CD4-positive, alpha-beta T cell (primary cell): ENCODE measurements at regions of chr19 and their contacts with region 1.

Region 1: GRCh38 chr19:4909897-4910593 is 744 bp downstream of the UHRF1 start:
- DNase-seq: peak; percentile 87 to 96 (median 92)
- ATAC-seq: peak; percentile 88
- H3K4me3 ChIP-seq: peak overlapping the region; percentile 51
- H3K4me3 Mint-ChIP-seq: peak overlapping the region; percentile 98
- H3K27ac ChIP-seq: no peak overlapping the region
- H3K27ac Mint-ChIP-seq: peak overlapping the region; percentile 84
- H3K4me1 ChIP-seq: peaks cover 58% of the 10 kb centered on the region
- H3K4me1 Mint-ChIP-seq: peaks cover 52% of the 10 kb centered on the region
- H3K27me3 ChIP-seq: no peaks in the 10 kb centered on the region
- H3K27me3 Mint-ChIP-seq: no peaks in the 10 kb centered on the region
- CTCF ChIP-seq: no peak

Region 2: DNA sequence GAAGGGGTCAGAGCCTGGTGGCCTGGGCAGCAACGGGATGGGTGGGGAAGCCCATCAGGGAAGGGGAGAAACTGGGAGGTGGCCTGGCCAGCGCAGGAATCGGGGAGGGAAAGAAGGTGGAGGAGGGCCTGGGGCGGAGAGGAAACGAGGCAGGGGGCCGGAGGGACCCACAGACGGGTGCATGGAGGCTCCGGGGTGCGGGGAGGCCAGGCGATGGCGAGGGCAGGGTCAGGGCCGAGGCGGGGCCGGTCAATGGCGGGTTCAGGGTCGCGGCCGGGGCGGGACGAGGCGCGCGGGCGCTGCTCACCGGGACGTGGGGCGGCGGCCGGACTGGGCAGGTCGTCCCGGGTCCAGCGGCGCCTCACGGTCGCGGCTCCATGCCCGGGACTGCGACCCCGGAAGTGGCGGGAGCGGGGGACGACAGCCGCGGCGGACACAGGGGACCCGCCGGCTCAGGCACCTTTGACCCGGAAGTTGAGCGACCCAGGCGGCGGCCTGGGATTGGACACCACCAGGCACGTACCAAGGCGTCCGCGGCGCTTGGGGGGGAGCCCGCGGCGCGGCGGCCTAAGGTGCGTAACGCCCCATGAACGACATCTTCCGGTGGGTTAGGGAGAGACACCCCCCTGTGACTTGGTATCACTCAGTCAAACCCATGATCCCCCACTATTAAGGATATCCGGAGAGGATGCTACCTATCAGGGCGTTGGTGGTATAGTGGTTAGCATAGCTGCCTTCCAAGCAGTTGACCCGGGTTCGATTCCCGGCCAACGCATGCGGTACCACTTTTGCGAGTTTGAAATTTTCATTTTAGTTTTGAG is 186.5 kb before region 1 on chr19 and contains the start of gene DPP9:
- CTCF ChIA-PET with region 1: no interaction called
- POLR2A ChIA-PET with region 1: no interaction called
- intact Hi-C with region 1: loop called (anchors 5 to 10 kb)
- DNase-seq: peak; percentile 93 to 100 (median 96)
- ATAC-seq: peak; percentile 93
- H3K4me3 ChIP-seq: peak within 1 kb of the TSS; percentile 97
- H3K4me3 Mint-ChIP-seq: peak within 1 kb of the TSS; percentile 95
- H3K27ac ChIP-seq: peak within 1 kb of the TSS; percentile 64 to 85
- H3K27ac Mint-ChIP-seq: peak within 1 kb of the TSS; percentile 97
- H3K4me1 ChIP-seq: peaks cover 30% of the 10 kb centered on the region
- H3K4me1 Mint-ChIP-seq: peaks cover 25% of the 10 kb centered on the region
- H3K27me3 ChIP-seq: no peaks in the 10 kb centered on the region
- H3K27me3 Mint-ChIP-seq: peaks cover 13% of the 10 kb centered on the region
- CTCF ChIP-seq: no peak
- total RNA-seq, gene DPP9: 67.9 to 72.8 TPM

Region 3: DNA sequence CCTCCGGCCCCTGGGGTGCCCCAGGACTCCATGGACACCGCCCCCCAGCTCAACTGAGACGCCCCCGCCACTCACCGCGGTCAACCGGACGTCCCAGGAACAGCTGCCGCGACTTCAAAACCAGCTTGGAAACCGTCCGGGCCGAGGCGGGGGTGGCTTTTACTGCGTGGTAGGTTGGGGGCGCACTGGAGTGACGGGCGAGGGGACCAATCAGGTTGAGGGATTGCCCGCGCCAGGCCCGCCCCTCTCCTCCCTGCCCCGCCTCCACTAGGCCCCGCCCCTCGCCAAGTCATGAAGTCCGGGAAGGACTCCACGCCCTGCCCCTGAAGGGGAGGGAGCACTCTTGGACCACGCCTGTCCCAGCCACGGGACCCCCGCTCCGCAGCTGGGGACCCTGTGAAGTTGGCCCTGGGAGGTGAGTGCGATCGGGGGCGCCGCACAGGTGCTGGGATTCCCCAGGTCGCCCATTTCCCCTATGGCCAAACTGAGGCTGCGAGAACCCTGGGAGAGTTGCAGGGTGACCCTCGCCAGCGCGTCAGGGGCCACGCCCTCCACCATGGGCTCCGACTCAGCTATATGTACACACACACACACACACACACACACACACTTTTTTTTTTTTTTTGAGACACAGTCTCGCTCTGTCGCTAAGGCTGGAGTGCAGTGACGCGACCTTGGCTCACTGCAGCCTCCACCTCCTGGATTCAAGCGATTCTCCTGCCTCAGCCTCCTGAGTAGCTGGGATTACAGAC is 42.3 kb before region 1 on chr19 and contains the start of gene PLIN3:
- CTCF ChIA-PET with region 1: interaction called, 60 read pairs
- POLR2A ChIA-PET with region 1: interaction called, 24 read pairs
- intact Hi-C with region 1: loop called (anchors 1 kb)
- DNase-seq: peak; percentile 83 to 94 (median 89)
- ATAC-seq: peak; percentile 93
- H3K4me3 ChIP-seq: peak within 1 kb of the TSS; percentile 89
- H3K4me3 Mint-ChIP-seq: peak within 1 kb of the TSS; percentile 88
- H3K27ac ChIP-seq: peak within 1 kb of the TSS in 1 of 2 donors; percentile 70
- H3K27ac Mint-ChIP-seq: peak within 1 kb of the TSS; percentile 69
- H3K4me1 ChIP-seq: peaks cover 26% of the 10 kb centered on the region
- H3K4me1 Mint-ChIP-seq: peaks cover 11% of the 10 kb centered on the region
- H3K27me3 ChIP-seq: no peaks in the 10 kb centered on the region
- H3K27me3 Mint-ChIP-seq: peaks cover 3% of the 10 kb centered on the region
- CTCF ChIP-seq: no peak
- total RNA-seq, gene PLIN3: 18.2 to 19.1 TPM

Region 4: GRCh38 chr19:4968462-4969291 is 58.6 kb after region 1 on chr19 and contains the start of gene KDM4B:
- CTCF ChIA-PET with region 1: interaction called, 9 read pairs
- POLR2A ChIA-PET with region 1: interaction called, 131 read pairs
- intact Hi-C with region 1: loop called in 1 of 2 experiments (anchors 2 kb)
- DNase-seq: peak; percentile 96 to 100 (median 98)
- ATAC-seq: peak; percentile 88
- H3K4me3 ChIP-seq: peak within 1 kb of the TSS; percentile 63
- H3K4me3 Mint-ChIP-seq: peak within 1 kb of the TSS; percentile 92
- H3K27ac ChIP-seq: peak within 1 kb of the TSS; percentile 18 to 59
- H3K27ac Mint-ChIP-seq: peak within 1 kb of the TSS; percentile 87
- H3K4me1 ChIP-seq: peaks cover 44% of the 10 kb centered on the region
- H3K4me1 Mint-ChIP-seq: peaks cover 32% of the 10 kb centered on the region
- H3K27me3 ChIP-seq: no peaks in the 10 kb centered on the region
- H3K27me3 Mint-ChIP-seq: no peaks in the 10 kb centered on the region
- CTCF ChIP-seq: no peak
- total RNA-seq, gene KDM4B: 41.8 to 42.5 TPM

Region 5: DNA sequence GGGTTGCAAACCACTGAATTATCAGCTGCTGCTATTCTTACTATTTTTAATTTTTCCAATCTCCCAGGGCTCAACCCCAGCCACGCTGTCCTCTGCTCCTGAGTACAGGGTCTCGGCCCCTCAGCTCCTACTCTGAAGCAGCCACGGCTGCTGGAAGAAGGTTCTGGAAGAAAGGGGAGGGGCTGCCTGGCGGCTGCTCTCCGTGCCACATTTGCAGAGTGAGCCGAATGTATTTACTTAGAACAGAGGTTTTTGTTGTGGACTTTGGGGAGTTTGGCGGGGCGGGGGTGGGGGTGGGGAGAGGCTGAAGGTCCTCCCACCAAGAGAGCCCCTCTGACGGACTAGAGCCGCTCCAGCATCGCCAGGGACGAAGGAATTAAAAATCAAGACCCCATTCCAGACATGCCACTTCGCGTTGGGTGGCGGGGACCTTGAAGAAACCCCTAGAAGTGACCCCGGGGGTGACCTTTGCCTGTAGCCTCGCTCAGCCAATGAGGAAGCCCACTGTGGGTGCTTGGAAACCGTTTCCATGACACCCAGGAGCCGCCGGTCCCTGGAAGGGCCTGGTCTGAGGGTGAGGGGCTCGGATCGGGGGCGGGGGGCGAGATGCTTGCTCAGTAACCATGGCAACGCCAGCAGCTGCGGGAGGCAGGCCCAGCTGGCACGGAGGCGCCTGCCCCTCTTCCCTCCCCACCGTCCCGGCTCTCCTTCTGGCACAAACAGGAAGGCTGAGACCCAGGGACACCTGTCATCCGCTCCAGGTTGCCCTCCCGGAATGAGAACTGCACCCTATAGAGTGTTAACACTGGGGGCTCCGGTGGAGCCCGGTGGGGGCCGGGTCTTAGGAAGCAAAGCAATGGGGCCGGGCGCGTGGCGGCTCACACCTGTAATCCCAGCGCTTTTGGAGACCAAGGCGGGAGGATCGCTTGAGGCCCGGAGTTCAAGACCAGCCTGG is 484.8 kb after region 1 on chr19:
- CTCF ChIA-PET with region 1: no interaction called
- POLR2A ChIA-PET with region 1: no interaction called
- intact Hi-C with region 1: no loop called
- DNase-seq: no peak
- ATAC-seq: no peak
- H3K4me3 ChIP-seq: no peak overlapping the region
- H3K4me3 Mint-ChIP-seq: no peak overlapping the region
- H3K27ac ChIP-seq: no peak overlapping the region
- H3K27ac Mint-ChIP-seq: no peak overlapping the region
- H3K4me1 ChIP-seq: no peaks in the 10 kb centered on the region
- H3K4me1 Mint-ChIP-seq: no peaks in the 10 kb centered on the region
- H3K27me3 ChIP-seq: peaks cover 38 to 63% of the 10 kb centered on the region in 2 experiments
- H3K27me3 Mint-ChIP-seq: peaks cover 74% of the 10 kb centered on the region
- CTCF ChIP-seq: no peak

Region 6: DNA sequence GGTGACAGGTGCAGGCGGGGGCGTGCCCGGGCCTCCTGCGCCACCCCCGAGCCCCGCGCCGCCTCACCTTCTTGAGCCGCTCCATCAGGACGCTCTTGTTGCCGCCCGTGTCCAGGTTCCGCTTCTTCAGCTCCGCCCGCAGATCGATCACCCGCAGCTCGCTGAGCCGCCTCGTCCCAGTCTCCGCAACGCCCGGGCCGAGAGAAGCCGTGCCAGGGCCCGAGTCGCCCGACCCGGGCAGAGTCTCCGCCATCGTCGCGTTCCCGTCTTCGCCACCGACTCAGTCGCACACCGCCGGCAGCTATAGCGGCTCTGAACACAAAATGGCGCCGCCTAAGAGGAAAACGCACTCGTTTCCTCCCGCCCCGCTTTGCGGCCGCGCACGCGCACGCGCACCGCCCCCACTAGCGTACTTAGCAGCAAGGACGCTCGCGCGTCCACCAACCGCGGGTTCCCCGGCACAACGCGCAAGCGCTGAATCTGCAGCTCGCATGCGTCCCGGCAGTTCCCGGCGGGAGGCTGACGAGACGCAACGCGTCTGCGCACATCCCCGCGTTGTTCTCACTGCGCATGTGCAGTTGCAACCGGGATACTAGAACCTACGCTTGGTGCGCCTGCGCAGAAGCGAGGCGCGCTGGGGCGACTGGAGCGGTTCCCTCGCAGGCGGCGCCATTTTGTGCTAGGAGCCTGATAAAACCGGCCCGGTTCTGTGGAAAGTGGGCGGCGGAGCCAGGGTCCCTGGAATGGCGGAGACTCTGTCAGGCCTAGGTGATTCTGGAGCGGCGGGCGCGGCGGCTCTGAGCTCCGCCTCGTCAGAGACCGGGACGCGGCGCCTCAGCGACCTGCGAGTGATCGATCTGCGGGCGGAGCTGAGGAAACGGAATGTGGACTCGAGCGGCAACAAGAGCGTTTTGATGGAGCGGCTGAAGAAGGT is 712.7 kb after region 1 on chr19 and contains the starts of genes SAFB and SAFB2:
- CTCF ChIA-PET with region 1: no interaction called
- POLR2A ChIA-PET with region 1: no interaction called
- intact Hi-C with region 1: loop called in 1 of 2 experiments (anchors 2 kb)
- DNase-seq: peak; percentile 98 to 100 (median 100)
- ATAC-seq: peak; percentile 79
- H3K4me3 ChIP-seq: peak within 1 kb of the TSS; percentile 85
- H3K4me3 Mint-ChIP-seq: peak within 1 kb of the TSS; percentile 99
- H3K27ac ChIP-seq: peak within 1 kb of the TSS; percentile 90 to 95
- H3K27ac Mint-ChIP-seq: peak within 1 kb of the TSS; percentile 98
- H3K4me1 ChIP-seq: peaks cover 79% of the 10 kb centered on the region
- H3K4me1 Mint-ChIP-seq: peaks cover 84% of the 10 kb centered on the region
- H3K27me3 ChIP-seq: no peaks in the 10 kb centered on the region
- H3K27me3 Mint-ChIP-seq: no peaks in the 10 kb centered on the region
- CTCF ChIP-seq: no peak
- total RNA-seq, gene SAFB: 195 to 200 TPM
- total RNA-seq, gene SAFB2: 238 to 246 TPM